PC-9 (cell line): ENCODE measurements at regions of chr7 and their contacts with region 1.

Region 1: GRCh38 chr7:23273141-23273599 is 26.0 kb upstream of the MALSU1 start:
- DNase-seq: peak; percentile 98 to 99
- H3K4me3 ChIP-seq: peak overlapping the region; percentile 42
- H3K27ac ChIP-seq: peak overlapping the region; percentile 60
- H3K4me1 ChIP-seq: peaks cover 19% of the 10 kb centered on the region
- H3K27me3 ChIP-seq: no peaks in the 10 kb centered on the region
- CTCF ChIP-seq: peak; percentile 98

Region 2: DNA sequence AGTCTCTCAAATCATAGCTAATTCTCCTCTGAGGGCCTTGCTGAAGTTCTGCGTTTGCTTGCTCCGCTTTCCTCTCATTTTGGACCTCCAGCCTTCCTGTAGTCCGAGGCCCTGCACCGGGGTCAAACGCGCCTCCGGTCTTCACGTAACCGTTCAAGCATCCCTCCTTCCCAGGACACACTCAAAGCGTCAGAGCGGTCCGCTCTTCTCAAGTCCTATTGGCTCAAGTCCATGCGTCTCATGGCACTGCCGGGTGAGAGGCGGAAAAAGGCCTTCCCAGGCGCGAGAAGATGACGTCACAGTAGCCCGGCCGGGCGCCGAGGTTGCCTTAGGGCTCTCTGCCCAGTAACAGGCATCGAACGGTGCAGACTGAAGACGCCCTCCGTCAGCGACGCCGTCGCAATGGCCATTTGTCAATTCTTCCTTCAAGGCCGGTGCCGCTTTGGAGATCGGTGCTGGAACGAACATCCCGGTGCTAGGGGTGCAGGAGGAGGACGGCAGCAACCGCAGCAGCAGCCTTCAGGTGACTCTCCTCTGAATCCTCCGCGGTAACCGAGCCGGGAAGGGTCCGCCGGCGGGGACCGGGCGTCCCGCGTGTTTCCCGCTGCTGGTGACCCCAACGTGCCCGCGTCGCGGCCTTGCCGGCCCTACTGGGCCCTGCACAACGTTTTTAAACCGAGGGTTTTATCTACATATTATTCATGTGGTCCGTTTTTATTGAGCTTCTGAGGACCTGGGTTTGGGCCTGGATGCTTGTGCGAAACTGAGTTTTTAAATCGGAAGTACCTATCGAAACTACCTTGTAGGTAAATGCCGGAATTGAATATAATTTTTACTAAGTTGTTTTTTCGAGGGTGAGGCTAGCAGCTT is 91.3 kb before region 1 on chr7 and contains the start of gene NUP42:
- CTCF ChIA-PET with region 1: interaction called, 13 read pairs
- POLR2A ChIA-PET with region 1: interaction called, 4 read pairs
- intact Hi-C with region 1: loop called (anchors 1 kb)
- DNase-seq: peak; percentile 99 to 100
- H3K4me3 ChIP-seq: peak within 1 kb of the TSS; percentile 98
- H3K27ac ChIP-seq: peak within 1 kb of the TSS; percentile 87
- H3K4me1 ChIP-seq: peaks cover 27% of the 10 kb centered on the region
- H3K27me3 ChIP-seq: no peaks in the 10 kb centered on the region
- CTCF ChIP-seq: no peak
- total RNA-seq, gene NUP42: 41.3 and 51.3 TPM in 2 replicates

Region 3: DNA sequence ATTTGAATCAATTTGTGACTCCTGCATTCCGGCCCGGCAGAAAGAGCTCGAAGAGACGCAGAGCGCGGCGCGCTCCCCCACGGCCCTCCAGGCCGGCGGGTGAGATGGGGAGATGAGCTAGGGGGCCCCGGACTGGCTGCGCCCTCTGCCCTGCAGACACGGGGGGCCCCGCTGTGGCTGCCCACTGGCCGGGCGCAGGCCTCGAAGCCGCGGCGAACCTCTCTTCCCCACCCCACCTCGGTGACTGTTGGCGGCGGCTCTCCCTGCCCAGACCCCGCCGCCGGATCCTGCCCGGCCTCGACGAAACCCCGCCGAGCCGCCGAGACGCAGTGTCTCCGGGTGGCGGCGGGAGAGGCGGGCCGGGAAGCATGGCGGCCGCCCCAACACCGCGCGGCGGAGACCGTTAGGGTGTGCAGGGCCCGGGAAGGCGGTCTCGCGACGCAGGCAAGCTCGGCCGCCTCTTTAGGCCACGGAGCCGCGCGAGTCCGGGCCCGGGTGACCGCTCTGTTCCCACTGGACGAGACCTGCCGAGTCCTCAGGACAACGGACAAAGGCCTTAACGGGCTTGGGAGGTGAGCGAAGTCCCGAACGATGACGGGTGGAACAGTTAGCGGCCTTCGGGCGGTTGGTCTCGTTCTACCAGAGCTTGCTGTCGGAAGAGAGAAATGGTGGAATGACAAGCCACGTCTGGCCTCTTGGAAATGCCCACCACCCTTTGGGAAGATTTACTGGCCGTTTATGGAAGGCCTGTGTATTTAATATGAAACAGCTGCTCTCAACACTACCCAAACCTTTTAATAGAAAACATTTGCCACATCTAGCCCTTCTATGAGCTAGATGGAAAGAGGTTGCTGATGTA is 67.0 kb before region 1 on chr7:
- CTCF ChIA-PET with region 1: no interaction called
- POLR2A ChIA-PET with region 1: no interaction called
- intact Hi-C with region 1: no loop called
- DNase-seq: no peak
- H3K4me3 ChIP-seq: no peak overlapping the region
- H3K27ac ChIP-seq: no peak overlapping the region
- H3K4me1 ChIP-seq: no peaks in the 10 kb centered on the region
- H3K27me3 ChIP-seq: no peaks in the 10 kb centered on the region
- CTCF ChIP-seq: no peak

Region 4: DNA sequence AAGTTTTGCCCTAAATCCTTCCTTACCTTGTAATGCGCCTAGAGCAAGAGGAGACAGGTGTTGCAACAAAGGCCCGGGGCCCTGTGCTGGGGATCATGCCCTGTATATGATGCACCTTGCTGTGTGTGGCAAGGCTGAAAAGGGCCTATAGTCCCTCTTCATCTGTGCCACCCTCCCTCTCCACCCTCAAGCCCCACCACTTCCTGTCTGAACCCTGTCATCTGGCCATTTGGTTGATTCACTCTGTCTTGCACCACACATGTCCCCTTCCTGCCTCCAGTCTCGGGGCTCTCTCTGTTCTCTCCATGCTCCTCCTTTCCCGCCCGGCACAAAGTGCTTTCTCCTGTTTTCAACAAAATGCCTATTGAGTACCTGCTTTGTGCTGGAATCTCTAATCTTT is 14.4 kb after region 1 on chr7:
- CTCF ChIA-PET with region 1: no interaction called
- POLR2A ChIA-PET with region 1: no interaction called
- intact Hi-C with region 1: no loop called
- DNase-seq: no peak
- H3K4me3 ChIP-seq: no peak overlapping the region
- H3K27ac ChIP-seq: no peak overlapping the region
- H3K4me1 ChIP-seq: no peaks in the 10 kb centered on the region
- H3K27me3 ChIP-seq: no peaks in the 10 kb centered on the region
- CTCF ChIP-seq: no peak

Region 5: GRCh38 chr7:23315366-23315765 is 42.2 kb after region 1 on chr7:
- CTCF ChIA-PET with region 1: interaction called, 15 read pairs
- POLR2A ChIA-PET with region 1: no interaction called
- intact Hi-C with region 1: loop called (anchors 5 kb)
- DNase-seq: no peak
- H3K4me3 ChIP-seq: no peak overlapping the region
- H3K27ac ChIP-seq: no peak overlapping the region
- H3K4me1 ChIP-seq: no peaks in the 10 kb centered on the region
- H3K27me3 ChIP-seq: no peaks in the 10 kb centered on the region
- CTCF ChIP-seq: no peak

Region 6: DNA sequence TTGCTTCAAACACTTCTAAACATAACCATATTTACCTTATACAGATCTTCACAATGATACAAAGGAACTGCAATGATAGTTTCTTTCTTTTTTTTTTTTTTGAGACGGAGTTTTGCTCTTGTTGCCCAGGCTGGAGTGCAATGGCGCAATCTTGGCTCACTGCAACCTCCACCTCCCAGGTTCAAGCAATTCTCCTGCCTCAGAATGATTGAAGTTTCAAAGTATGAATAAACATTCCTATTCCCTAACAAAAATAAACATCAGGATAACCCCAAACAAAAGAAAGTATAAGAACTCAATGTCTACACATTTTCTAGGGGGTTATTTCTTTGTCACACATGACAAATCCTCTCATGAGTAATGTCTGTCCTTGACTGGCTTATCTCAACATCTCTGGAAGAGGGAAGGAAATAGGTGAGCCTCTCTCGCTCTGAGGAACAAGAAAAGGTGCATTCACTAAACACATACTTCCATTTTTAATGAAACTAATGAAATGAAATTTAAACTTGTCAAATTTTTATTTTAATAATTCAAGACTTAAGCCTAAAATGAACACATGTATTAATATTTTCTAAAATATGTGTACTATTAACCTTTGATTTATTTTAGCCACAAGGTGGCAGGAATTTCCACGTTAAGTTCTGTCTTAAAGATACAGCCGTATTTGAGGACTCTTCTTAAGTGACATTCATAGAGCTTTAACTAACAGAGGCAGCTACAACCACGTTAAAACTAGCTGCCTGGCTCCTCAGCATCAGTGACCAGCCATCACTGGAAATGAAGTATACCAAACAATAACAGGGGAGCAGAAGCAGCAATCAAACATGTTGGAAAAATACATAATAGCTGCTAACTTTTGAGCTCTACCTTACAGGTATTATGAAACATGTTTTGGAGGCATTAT is 84.3 kb after region 1 on chr7:
- CTCF ChIA-PET with region 1: interaction called, 9 read pairs
- POLR2A ChIA-PET with region 1: no interaction called
- intact Hi-C with region 1: loop called (anchors 1 kb)
- DNase-seq: peak; percentile 51 to 99
- H3K4me3 ChIP-seq: peak overlapping the region; percentile 28
- H3K27ac ChIP-seq: peak overlapping the region; percentile 63
- H3K4me1 ChIP-seq: peaks cover 51% of the 10 kb centered on the region
- H3K27me3 ChIP-seq: no peaks in the 10 kb centered on the region
- CTCF ChIP-seq: peak; percentile 83